Activated CD8-positive, alpha-beta T cell treated with anti-CD3 and anti-CD28 coated beads, Interleukin-2, amount 10 ng/mL, durations not matched to agents 7 days and 5 days (primary cell): ENCODE measurements at regions of chr11 and their contacts with region 1.

Region 1: GRCh38 chr11:14148653-14149273 is 186.2 kb downstream of the SPON1 start:
- DNase-seq: no peak
- ATAC-seq: peak; percentile 79
- H3K4me3 Mint-ChIP-seq: no peak overlapping the region
- H3K27ac Mint-ChIP-seq: no peak overlapping the region
- H3K4me1 Mint-ChIP-seq: no peaks in the 10 kb centered on the region
- H3K27me3 Mint-ChIP-seq: peaks cover 2% of the 10 kb centered on the region

Region 2: DNA sequence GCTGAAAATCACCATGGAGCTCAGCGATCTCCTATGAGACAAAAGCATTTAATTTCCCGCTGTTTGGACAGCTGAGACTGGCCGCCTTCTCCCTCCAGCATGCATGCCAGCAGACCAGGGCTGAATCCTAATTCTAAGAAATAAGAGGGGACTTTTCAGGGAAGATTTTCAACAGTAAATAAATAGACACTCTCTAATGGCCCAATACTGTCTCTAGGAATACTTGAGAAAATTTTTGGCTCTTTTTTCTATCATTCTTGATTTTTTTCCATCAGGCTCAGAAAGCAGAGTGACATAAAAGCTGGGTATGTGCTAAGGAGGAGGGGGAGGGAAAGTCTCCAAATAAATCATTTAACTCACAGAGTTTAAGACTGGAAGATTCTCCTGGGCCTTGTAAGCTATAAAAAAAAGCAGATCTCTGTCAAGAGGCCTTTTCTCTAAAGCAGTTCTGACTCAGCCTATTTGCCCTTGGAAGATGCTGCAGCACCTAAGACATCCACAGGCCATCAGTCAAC is 203.8 kb before region 1 on chr11:
- CTCF ChIA-PET with region 1: interaction called, 13 read pairs
- POLR2A ChIA-PET with region 1: no interaction called
- DNase-seq: no peak
- ATAC-seq: no peak
- H3K4me3 Mint-ChIP-seq: no peak overlapping the region
- H3K27ac Mint-ChIP-seq: no peak overlapping the region
- H3K4me1 Mint-ChIP-seq: peaks cover 45% of the 10 kb centered on the region
- H3K27me3 Mint-ChIP-seq: peaks cover 12% of the 10 kb centered on the region

Region 3: DNA sequence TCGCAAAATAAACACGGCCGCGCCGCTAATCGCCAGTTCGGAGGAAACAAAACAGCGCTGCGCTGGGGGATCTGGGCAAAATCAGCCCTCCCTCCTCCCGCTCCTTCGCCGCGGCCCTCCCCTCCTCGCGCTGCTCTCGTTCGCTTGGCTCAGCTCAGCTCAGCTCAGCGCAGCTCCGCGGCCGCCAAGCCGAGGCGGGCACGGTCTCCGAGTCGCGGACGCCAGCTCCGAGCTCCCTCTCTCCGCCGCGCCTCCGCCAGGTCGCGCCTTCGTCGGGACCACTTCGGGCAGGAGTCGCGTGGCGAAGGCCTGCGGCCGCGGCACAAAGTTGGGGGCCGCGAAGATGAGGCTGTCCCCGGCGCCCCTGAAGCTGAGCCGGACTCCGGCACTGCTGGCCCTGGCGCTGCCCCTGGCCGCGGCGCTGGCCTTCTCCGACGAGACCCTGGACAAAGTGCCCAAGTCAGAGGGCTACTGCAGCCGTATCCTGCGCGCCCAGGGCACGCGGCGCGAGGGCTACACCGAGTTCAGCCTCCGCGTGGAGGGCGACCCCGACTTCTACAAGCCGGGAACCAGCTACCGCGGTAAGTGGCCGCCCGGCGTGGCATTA is 186.1 kb before region 1 on chr11 and contains the start of gene SPON1:
- CTCF ChIA-PET with region 1: interaction called, 60 read pairs
- POLR2A ChIA-PET with region 1: no interaction called
- DNase-seq: peak; percentile 59
- ATAC-seq: peak; percentile 82
- H3K4me3 Mint-ChIP-seq: peak within 1 kb of the TSS; percentile 59
- H3K27ac Mint-ChIP-seq: peak within 1 kb of the TSS; percentile 14
- H3K4me1 Mint-ChIP-seq: peaks cover 11% of the 10 kb centered on the region
- H3K27me3 Mint-ChIP-seq: peaks cover 72% of the 10 kb centered on the region
- total RNA-seq, gene SPON1: 0.42 to 0.47 TPM

Region 4: DNA sequence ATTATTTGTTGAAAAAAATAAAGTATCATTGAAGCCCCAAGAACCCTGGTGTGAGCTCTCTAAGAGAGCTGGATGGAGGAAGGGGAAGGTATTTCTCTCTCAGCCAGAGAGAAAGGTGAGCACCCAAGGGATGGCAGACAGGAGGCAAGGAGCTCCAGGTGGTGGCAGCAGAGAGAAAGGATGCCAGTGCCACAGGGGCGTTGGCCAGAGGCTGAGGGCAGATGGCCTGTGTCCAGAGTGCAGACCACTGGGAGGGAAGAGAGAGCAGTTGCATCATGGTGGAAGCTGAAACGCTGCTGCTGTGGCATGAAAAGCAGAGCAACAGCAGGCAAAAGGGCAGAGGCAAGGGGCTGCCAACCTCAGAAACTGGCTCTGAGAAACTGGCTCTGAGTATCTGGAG is 177.8 kb before region 1 on chr11:
- CTCF ChIA-PET with region 1: interaction called, 19 read pairs
- POLR2A ChIA-PET with region 1: no interaction called
- DNase-seq: no peak
- ATAC-seq: no peak
- H3K4me3 Mint-ChIP-seq: no peak overlapping the region
- H3K27ac Mint-ChIP-seq: no peak overlapping the region
- H3K4me1 Mint-ChIP-seq: peaks cover 13% of the 10 kb centered on the region
- H3K27me3 Mint-ChIP-seq: peaks cover 25% of the 10 kb centered on the region